Activated CD4-positive, alpha-beta memory T cell treated with anti-CD3 and anti-CD28 coated beads for 36 hours (primary cell): ENCODE measurements at regions of chr1 and their contacts with region 1.

Region 1: DNA sequence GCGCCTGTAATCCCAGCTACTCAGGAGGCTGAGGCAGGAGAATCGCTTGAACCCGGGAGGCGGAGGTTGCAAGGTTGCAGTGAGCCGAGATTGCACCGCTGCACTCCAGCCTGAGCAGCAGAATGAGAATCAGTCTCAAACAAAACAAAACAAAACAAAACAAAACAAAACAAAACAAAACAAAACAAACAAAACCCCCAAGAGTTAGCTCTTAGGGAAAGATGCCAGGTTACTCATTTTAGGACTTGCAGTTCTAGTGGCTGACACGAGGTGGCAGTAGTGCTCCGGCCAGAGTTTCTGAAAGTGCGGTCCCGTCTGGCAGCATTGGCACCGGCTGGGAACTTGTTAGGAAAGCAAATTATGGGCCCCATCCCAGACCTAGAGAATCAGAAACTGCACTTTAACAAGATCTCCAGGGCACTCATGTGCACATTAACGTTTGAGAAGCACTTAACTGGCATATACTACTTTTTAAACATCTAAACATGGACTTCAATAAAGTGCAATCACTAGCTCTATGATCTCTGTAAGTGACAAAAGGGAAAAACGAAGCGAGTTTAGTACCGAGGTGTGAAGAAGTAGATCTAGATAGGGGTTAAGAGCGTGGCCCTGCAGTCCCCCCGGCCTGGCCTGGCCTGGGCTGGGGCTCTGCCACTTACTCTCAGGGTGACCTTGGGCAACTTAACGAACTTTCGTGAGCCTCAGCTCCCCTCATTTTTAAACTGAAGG is 41.9 kb upstream of the TNFRSF1B start:
- DNase-seq: peak; percentile 86
- H3K4me3 Mint-ChIP-seq: no peak overlapping the region
- H3K27ac Mint-ChIP-seq: peak overlapping the region; percentile 42
- H3K4me1 Mint-ChIP-seq: peaks cover 52% of the 10 kb centered on the region
- H3K27me3 Mint-ChIP-seq: no peaks in the 10 kb centered on the region

Region 2: DNA sequence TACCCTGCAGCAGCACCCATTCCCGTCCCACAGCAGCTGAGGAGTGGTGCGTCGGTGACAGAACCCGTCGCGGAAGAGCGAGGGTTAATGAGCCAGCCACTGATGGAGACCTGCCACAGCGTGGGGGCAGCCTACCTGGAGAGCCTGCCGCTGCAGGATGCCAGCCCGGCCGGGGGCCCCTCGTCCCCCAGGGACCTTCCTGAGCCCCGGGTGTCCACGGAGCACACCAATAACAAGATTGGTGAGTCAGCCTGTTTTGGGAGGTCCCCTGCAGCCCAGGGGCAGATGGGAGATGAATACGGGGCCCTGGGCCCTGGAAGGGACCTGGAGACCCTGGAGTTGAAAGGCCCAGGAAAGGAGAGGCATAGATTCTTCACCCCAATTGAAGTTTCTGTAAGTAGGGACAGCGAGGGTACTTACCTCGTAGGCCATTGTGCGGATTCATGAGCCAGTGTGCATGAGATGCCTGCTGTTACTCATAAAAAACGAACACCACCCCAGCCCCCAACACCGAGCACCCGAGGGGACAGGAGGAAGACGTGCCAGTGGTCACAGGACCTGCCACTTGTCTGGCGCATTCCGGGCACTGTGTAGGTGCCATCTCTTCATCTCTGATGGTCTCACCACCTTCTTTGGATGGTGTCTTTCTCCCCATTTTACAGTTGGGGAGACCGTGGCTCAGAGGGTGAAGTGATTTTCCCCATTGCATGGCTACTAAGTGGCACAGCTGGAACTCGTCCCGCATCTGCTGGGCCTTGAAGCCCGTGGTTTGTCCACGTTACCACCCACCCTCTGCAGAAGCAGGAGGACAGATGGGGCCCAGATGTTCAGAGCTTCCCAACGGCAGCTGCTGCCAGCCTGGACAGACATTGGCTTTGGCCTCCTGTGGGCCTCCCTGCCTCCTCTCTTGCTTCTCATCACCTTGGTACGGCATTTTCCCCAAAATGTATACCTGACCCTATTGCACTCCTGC is 13.6 kb after region 1 on chr1:
- CTCF ChIA-PET with region 1: interaction called, 22 read pairs
- POLR2A ChIA-PET with region 1: no interaction called
- intact Hi-C with region 1: no loop called
- DNase-seq: no peak
- H3K4me3 Mint-ChIP-seq: no peak overlapping the region
- H3K27ac Mint-ChIP-seq: no peak overlapping the region
- H3K4me1 Mint-ChIP-seq: peaks cover 15% of the 10 kb centered on the region
- H3K27me3 Mint-ChIP-seq: no peaks in the 10 kb centered on the region

Region 3: DNA sequence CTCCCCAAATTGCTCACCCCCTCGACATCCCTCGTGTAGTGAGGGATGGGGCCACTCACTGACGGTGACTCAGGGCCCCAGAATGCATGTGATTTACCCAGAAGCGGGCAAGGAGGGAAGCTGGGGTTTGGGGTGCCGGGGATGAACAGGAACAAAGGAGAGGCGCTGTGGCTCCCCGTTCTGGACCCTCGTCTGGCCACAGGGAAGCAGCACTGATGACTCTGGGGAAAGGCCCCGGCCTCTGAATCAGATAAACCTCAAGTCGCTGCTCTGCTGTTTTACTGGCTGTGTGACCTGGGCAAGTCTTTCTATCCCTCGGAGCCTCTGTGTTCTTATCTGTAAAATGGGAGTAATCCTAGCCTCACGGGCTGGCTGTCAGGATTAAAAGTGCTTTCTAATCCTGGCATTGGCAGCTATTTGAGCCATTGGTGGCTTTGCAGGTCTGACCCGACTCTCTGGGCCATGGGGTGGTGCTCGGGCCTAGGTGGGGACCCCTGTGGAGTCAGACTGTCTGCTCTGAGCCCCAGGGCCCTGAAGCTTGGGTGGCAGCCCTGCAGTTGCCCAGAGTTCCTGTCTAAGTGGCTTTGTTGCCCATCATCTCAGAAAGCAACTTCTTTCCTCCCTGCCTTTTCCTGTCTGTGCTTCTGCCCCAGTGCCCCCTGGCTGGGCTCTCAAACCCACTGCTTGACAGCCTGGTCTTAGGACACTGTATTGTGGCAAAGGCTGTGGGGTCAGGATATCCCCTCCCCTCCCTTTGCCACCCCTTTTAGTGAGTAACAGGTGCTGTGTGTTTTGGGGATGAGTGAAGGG is 47.4 kb after region 1 on chr1:
- CTCF ChIA-PET with region 1: interaction called, 168 read pairs
- POLR2A ChIA-PET with region 1: interaction called, 5 read pairs
- intact Hi-C with region 1: no loop called
- DNase-seq: peak; percentile 69
- H3K4me3 Mint-ChIP-seq: peak overlapping the region; percentile 77
- H3K27ac Mint-ChIP-seq: peak overlapping the region; percentile 94
- H3K4me1 Mint-ChIP-seq: peaks cover 78% of the 10 kb centered on the region
- H3K27me3 Mint-ChIP-seq: no peaks in the 10 kb centered on the region

Region 4: DNA sequence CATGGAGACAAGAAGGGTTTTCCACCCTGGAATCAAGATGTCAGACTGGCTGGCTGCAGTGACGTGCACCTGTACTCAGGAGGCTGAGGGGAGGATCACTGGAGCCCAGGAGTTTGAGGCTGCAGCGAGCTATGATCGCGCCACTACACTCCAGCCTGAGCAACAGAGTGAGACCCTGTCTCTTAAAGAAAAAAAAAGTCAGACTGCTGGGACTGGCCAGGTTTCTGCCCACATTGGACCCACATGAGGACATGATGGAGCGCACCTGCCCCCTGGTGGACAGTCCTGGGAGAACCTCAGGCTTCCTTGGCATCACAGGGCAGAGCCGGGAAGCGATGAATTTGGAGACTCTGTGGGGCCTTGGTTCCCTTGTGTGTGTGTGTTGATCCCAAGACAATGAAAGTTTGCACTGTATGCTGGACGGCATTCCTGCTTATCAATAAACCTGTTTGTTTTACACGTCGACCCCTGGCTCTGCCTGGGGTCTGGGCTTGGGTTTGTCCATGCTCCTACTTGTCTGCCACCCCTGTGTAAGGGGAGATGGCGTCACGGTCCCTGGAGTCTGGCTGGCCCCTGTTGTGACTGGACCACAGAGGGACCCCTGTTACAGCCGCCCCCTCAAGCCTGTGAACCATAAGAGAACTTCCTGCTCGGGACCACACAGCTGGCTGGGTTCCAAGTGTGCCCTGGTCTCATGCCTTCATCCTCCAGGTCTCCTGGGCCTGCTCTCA is 84.1 kb after region 1 on chr1:
- CTCF ChIA-PET with region 1: interaction called, 369 read pairs
- POLR2A ChIA-PET with region 1: interaction called, 7 read pairs
- intact Hi-C with region 1: loop called (anchors 1 kb)
- DNase-seq: peak; percentile 91
- H3K4me3 Mint-ChIP-seq: no peak overlapping the region
- H3K27ac Mint-ChIP-seq: peak overlapping the region; percentile 44
- H3K4me1 Mint-ChIP-seq: peaks cover 45% of the 10 kb centered on the region
- H3K27me3 Mint-ChIP-seq: no peaks in the 10 kb centered on the region

Region 5: GRCh38 chr1:12244078-12244477 is 119.2 kb after region 1 on chr1:
- CTCF ChIA-PET with region 1: interaction called, 40 read pairs
- POLR2A ChIA-PET with region 1: no interaction called
- intact Hi-C with region 1: no loop called
- DNase-seq: peak; percentile 12
- H3K4me3 Mint-ChIP-seq: no peak overlapping the region
- H3K27ac Mint-ChIP-seq: peak overlapping the region; percentile 29
- H3K4me1 Mint-ChIP-seq: peaks cover 8% of the 10 kb centered on the region
- H3K27me3 Mint-ChIP-seq: no peaks in the 10 kb centered on the region

Region 6: DNA sequence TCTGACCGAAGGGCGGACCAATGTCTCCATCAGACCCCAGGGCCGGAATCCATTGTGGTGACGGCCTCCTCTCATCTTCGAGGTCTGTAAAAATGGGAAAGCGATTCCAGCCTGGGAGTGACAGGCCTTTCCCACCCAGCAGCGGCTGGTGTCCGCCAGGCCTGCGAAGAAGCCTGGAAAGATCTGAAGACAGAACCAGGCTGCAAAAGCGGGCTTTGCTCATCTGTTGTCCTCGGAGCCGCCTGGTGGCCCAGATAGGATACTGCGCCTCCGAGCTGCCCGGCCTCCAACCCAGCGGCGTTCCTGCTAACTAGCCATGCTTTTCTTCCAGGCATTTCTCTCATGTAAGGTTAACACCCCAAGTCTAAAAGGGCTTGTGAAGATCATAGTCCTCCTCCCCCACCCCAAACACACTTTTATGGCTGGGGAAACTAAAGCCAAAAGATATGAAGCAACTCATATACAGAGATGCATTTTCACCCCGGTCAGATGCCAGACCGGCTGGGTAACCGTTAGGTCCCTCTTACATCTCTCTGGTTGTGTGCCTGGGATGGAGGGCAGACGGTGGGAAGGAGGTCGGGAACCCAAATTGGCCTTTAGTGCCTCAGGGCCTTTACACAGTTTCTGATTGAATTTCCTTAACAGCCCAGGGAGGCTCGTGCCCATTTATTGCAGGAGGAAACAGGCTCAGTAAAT is 495.1 kb after region 1 on chr1:
- CTCF ChIA-PET with region 1: interaction called, 6 read pairs
- POLR2A ChIA-PET with region 1: no interaction called
- intact Hi-C with region 1: loop called (anchors 10 kb)
- DNase-seq: peak; percentile 87
- H3K4me3 Mint-ChIP-seq: peak overlapping the region; percentile 95
- H3K27ac Mint-ChIP-seq: peak overlapping the region; percentile 52
- H3K4me1 Mint-ChIP-seq: peaks cover 36% of the 10 kb centered on the region
- H3K27me3 Mint-ChIP-seq: no peaks in the 10 kb centered on the region